Sigmoid colon (tissue), 7 donors: ENCODE measurements at regions of chrX and their contacts with region 1.

Region 1: GRCh38 chrX:123833387-123833786 is 26.5 kb upstream of the XIAP start:
- DNase-seq: peak; percentile 71
- H3K4me3 ChIP-seq: no peak overlapping the region
- H3K27ac ChIP-seq: no peak overlapping the region
- H3K4me1 ChIP-seq: peaks cover 0 to 4% (median 0%) of the 10 kb centered on the region in 4 donors
- H3K27me3 ChIP-seq: no peaks in the 10 kb centered on the region
- CTCF ChIP-seq: peak; percentile 41 to 66 (median 54)
- EP300 ChIP-seq: no peak
- POLR2A ChIP-seq: no peak

Region 2: GRCh38 chrX:123884809-123885408 is 51.5 kb after region 1 on chrX:
- intact Hi-C with region 1: loop called (anchors 5 kb)
- DNase-seq: no peak
- H3K4me3 ChIP-seq: no peak overlapping the region
- H3K27ac ChIP-seq: no peak overlapping the region
- H3K4me1 ChIP-seq: no peaks in the 10 kb centered on the region
- H3K27me3 ChIP-seq: no peaks in the 10 kb centered on the region
- CTCF ChIP-seq: peak in 1 of 4 experiments; percentile 38
- EP300 ChIP-seq: no peak
- POLR2A ChIP-seq: no peak

Region 3: DNA sequence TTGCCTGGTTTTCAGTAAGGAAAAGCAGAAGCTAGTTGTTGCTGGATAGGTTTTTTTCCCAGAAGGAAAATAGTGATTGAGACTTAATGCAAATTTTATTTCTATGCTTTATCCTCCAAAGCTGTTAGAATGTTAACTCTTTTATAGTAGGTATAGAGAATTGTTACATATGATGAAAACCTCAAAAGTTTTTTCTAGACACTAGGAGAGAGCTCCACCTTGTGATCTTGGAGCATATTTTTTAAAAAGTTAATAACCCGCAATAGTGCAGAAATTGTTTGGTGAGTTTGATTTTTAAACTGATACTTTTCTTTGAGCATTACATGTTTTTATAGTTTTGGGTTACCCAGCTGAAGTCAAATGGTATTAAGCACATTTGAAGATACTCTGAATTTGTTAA is 184.6 kb after region 1 on chrX:
- intact Hi-C with region 1: no loop called
- DNase-seq: no peak
- H3K4me3 ChIP-seq: no peak overlapping the region
- H3K27ac ChIP-seq: no peak overlapping the region
- H3K4me1 ChIP-seq: peaks cover 0 to 39% (median 7%) of the 10 kb centered on the region in 4 donors
- H3K27me3 ChIP-seq: no peaks in the 10 kb centered on the region
- CTCF ChIP-seq: peak in 1 of 4 experiments; percentile 14
- EP300 ChIP-seq: no peak
- POLR2A ChIP-seq: no peak